Activated T-helper 1 cell treated with anti-CD3 and anti-CD28 coated beads, Interleukin-12 subunit alpha, Interleukin-12 subunit beta, Interleukin-2, Interleukin-4 antibody, amounts not matched to agents 30 ng/mL and 10 ng/mL and 1 ng/mL, durations not matched to agents 14 hours and 24 hours and 36 hours (primary cell): ENCODE measurements at regions of chr13 and their contacts with region 1.

Region 1: DNA sequence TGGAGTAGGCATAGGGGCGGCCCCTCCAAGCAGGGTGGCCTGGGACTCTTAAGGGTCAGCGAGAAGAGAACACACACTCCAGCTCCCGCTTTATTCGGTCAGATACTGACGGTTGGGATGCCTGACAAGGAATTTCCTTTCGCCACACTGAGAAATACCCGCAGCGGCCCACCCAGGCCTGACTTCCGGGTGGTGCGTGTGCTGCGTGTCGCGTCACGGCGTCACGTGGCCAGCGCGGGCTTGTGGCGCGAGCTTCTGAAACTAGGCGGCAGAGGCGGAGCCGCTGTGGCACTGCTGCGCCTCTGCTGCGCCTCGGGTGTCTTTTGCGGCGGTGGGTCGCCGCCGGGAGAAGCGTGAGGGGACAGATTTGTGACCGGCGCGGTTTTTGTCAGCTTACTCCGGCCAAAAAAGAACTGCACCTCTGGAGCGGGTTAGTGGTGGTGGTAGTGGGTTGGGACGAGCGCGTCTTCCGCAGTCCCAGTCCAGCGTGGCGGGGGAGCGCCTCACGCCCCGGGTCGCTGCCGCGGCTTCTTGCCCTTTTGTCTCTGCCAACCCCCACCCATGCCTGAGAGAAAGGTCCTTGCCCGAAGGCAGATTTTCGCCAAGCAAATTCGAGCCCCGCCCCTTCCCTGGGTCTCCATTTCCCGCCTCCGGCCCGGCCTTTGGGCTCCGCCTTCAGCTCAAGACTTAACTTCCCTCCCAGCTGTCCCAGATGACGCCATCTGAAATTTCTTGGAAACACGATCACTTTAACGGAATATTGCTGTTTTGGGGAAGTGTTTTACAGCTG is at the starts of genes BRCA2 and ZAR1L:
- DNase-seq: peak; percentile 86
- H3K4me3 Mint-ChIP-seq: peak within 1 kb of the TSS; percentile 96
- H3K27ac Mint-ChIP-seq: peak within 1 kb of the TSS; percentile 100
- H3K4me1 Mint-ChIP-seq: peaks cover 48% of the 10 kb centered on the region
- H3K27me3 Mint-ChIP-seq: no peaks in the 10 kb centered on the region
- total RNA-seq, gene BRCA2: 16.7 and 18.9 TPM in 2 replicates
- total RNA-seq, gene ZAR1L: not detected in 2 replicates

Region 2: DNA sequence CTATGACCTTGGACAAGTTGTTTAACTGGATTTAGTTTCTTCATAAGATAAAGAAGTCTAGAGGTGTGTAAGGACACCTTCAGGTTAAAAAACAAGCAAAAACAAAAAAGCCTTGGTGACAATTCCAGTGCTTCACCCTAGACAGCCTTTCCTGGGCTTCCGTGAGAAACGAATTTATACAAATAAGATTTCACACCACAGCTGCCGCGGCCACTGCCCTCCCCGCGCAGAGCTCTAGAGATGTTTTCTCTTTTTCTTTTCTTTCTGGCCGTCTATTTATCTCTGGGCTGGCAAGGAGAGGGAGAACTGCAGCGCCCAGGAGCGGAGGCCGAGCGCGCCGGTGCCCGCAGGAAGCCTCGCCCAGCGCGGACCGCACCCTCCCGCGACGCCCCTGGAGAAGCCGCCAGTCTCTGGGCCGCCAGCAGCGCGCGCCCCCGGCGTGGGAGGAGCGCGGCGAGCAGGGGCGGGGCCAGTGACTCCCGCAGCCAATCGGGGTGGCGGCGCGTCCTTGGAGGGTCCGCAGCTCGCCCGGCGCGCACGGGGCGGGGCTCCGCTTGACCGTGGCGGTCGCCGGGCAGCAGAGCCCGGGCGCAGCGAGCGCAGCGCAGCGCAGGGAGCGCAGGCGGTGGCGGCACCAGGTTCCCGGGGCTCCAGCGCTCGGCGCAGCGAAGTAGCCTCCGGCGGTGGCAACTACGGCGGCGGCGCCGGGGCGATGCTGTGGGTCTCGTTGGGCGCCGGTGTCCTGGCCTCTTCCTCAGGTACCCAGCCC is 469.1 kb before region 1 on chr13:
- intact Hi-C with region 1: loop called (anchors 5 kb)
- DNase-seq: peak; percentile 81
- H3K4me3 Mint-ChIP-seq: peak overlapping the region; percentile 81
- H3K27ac Mint-ChIP-seq: no peak overlapping the region
- H3K4me1 Mint-ChIP-seq: peaks cover 19% of the 10 kb centered on the region
- H3K27me3 Mint-ChIP-seq: peaks cover 58% of the 10 kb centered on the region

Region 3: DNA sequence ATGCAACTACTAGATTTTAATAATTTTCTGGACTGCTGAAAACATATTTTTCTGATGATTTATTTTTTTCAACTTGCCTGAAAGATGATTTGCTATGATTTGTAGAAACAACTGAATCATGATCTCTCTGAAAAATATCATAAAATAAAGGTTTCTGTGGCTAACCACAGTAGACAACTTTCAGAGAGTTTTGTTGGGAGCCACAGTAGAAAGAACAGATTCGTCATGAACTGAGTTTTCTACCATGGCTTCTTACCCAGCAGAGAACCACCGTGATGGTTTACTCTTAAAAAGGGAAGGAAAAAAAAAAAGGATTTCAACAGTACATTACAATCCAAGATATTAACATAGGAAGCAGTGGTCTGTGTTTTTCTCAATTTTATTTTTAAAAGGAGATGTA is 18.2 kb before region 1 on chr13:
- intact Hi-C with region 1: loop called (anchors 1 kb)
- DNase-seq: no peak
- H3K4me3 Mint-ChIP-seq: no peak overlapping the region
- H3K27ac Mint-ChIP-seq: no peak overlapping the region
- H3K4me1 Mint-ChIP-seq: peaks cover 18% of the 10 kb centered on the region
- H3K27me3 Mint-ChIP-seq: peaks cover 17% of the 10 kb centered on the region

Region 4: GRCh38 chr13:32581177-32581786 is 265.8 kb after region 1 on chr13:
- intact Hi-C with region 1: loop called (anchors 1 kb)
- DNase-seq: no peak
- H3K4me3 Mint-ChIP-seq: no peak overlapping the region
- H3K27ac Mint-ChIP-seq: no peak overlapping the region
- H3K4me1 Mint-ChIP-seq: peaks cover 12% of the 10 kb centered on the region
- H3K27me3 Mint-ChIP-seq: peaks cover 19% of the 10 kb centered on the region

Region 5: DNA sequence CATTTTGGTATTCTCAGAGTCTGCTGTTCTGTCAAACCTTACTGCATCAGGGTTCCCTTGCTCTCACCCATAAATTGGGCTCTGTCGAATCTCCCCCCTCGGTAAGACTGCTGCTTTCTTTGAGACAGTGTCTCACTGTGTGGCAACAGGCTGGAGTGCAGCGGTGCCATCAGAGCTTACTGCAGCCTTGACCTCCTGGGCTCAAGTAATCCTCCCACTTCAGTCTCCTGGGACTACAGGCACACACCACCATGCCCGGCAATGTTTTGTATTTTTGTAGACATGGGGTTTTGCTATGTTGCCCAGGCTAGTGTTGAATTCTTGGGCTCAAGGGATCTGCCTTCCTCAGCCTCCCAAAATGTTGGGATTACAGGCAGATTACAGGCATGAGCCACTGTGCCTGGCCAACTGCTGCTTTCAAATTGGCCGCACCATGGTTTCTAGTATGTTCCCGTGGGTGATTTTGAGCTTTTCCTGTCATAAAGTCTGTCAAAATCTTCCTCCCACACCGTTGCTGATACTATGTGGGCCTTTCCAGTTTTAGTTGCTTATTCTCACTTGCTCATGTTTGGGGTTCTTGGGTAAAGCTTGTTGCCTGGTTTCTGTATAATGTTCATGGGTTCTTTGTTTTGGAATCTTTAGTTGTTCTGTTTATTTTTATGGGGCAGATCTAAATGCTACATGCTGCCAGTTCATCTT is 1513.1 kb after region 1 on chr13:
- intact Hi-C with region 1: loop called (anchors 10 kb)
- DNase-seq: no peak
- H3K4me3 Mint-ChIP-seq: no peak overlapping the region
- H3K27ac Mint-ChIP-seq: peak overlapping the region; percentile 80
- H3K4me1 Mint-ChIP-seq: peaks cover 31% of the 10 kb centered on the region
- H3K27me3 Mint-ChIP-seq: no peaks in the 10 kb centered on the region